MCF 10A (cell line): ENCODE measurements at regions of chr20 and their contacts with region 1.

Region 1: DNA sequence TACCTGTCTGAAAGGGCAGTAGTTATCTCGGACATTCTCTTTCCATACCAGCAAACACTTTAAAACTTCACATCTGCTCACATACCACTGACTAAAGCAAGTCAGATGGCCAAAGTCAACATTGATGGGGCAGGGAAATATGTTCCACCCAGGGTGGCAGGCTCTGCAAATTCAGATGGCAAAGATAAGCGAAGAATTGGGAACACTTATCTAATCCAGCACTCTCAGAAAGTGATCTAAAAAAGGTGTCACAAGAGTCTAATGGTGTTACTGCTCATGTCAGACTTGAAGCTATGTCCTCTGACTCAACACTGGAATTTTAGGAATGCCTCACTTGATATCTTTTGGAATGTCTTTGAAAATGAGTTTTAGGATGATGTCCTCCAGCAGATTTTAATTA is 1086.2 kb downstream of the KIF16B start:
- DNase-seq: no peak
- H3K4me3 Mint-ChIP-seq: no peak overlapping the region
- H3K27ac Mint-ChIP-seq: no peak overlapping the region
- H3K4me1 Mint-ChIP-seq: peaks cover 11% of the 10 kb centered on the region
- H3K27me3 Mint-ChIP-seq: no peaks in the 10 kb centered on the region
- CTCF ChIP-seq: no peak

Region 2: DNA sequence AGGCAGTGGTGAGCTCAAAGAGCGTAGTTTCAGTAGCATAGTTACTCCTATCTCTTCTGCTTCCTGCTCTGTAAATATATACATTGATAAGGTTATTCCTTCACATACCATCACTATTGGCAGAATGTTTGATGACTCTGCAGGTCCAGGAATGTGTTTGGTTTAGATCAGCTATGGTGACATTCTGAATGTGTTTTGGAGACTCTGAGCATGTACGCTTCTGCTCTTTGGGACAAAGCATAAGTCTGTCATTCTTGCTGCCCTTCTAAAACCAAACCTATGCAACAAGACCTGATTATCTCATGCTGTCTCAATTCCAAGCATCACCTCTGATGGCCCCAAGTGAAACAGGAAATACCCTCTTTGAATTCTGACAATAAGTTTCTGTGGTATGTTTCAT is 11.9 kb after region 1 on chr20:
- CTCF ChIA-PET with region 1: no interaction called
- POLR2A ChIA-PET with region 1: interaction called, 5 read pairs
- intact Hi-C with region 1: loop called (anchors 1 kb)
- DNase-seq: no peak
- H3K4me3 Mint-ChIP-seq: no peak overlapping the region
- H3K27ac Mint-ChIP-seq: no peak overlapping the region
- H3K4me1 Mint-ChIP-seq: no peaks in the 10 kb centered on the region
- H3K27me3 Mint-ChIP-seq: no peaks in the 10 kb centered on the region
- CTCF ChIP-seq: no peak